Sigmoid colon (tissue), 7 donors: ENCODE measurements at regions of chr17 and their contacts with region 1.

Region 1: DNA sequence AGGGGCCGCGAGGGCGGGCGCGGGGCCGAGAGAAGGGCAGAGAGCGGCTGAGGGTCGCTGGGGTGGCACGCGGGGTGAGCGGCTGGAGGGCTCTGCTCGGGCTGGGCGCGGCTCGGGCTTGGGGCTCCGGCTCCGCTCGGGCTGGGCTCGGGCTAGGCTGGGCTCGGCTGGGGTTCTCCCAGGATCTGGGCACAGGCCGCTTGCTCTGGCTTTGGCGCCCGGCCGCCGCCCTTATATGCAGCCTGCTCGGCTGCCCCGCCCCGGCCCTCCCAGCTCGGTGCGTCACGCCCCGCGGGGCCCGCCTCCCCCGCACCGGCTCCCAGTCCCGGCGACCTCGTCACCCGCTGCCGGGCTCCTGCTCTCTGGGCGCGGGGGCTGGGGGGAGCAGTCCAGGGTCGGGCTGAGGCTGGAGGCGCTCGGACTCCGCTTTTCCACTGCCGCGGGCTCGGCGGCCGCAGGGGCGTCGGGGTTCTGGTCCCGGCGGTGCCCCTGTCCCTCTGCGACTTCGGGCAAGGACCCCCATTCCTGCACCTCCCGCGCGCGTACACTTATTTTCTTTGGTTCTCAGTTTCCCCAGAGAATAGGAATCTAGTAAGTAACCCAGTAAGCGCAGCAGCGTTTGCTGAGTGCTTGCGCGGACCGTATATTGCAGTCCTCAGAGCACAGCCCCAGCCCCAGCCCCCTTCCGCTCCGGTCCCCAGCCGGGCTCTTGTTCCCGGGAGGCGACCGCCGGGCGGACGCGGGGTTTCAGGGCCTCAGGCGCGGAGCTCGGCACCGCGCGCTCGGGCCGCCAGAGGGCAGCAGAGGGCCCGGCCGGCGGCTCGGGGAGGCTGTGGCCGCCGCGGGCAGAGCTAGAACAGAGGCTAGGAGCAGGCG is at the start of gene RASD1:
- DNase-seq: peak; percentile 96
- H3K4me3 ChIP-seq: peak within 1 kb of the TSS; percentile 59 to 75 (median 64)
- H3K27ac ChIP-seq: peak within 1 kb of the TSS; percentile 82 to 89 (median 86)
- H3K4me1 ChIP-seq: peaks cover 0 to 24% (median 23%) of the 10 kb centered on the region in 4 donors
- H3K27me3 ChIP-seq: peaks cover 0 to 11% (median 0%) of the 10 kb centered on the region in 3 donors
- CTCF ChIP-seq: peak; percentile 30 to 98 (median 46)
- EP300 ChIP-seq: no peak
- POLR2A ChIP-seq: peak; percentile 83 to 87
- total RNA-seq, gene RASD1: 5.8 to 12.8 (median 12.1) TPM

Region 2: DNA sequence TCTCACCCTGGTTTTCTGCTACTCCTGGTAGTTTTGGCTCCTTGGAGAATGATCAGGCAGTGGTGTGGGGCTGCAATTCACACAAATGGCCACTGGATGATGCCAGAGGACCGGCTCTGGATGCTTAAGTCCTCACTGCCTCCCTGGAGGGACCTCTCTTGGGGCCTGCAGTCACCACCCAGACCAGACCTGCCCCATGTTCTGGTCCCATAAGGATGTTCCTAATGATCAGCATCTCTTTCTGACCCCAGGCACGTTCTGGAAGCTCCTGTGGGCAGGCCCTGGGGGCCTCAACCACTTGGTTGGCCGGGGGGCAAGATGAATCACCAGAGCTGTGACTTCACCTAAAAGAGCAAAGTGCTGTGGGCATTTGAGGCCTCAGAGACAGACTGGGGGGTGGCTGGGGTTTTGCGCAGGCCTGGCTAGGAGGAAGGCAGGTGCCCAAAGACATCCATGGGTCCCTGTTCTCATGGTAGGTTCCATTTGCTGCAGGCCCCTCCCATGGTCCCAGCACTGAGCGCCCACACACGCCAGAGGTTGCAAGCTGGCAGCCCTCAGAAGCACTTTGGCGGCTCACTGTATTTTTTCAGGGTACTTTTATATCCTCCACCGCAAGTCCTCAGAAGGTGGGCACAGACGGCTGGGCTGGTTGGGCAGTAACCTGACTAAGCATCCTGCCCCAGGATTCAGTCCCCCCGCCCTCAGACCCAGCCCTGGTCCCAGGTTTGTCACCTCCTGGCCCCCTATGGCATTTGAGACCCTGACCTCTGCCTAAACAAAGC is 140.1 kb before region 1 on chr17:
- intact Hi-C with region 1: loop called (anchors 2 kb)
- DNase-seq: peak; percentile 81
- H3K4me3 ChIP-seq: no peak overlapping the region
- H3K27ac ChIP-seq: no peak overlapping the region
- H3K4me1 ChIP-seq: peaks cover 0 to 7% (median 4%) of the 10 kb centered on the region in 4 donors
- H3K27me3 ChIP-seq: peaks cover 0 to 13% (median 7%) of the 10 kb centered on the region in 3 donors
- CTCF ChIP-seq: peak; percentile 89 to 99 (median 98)
- EP300 ChIP-seq: no peak
- POLR2A ChIP-seq: no peak

Region 3: GRCh38 chr17:17462048-17462824 is 34.2 kb before region 1 on chr17:
- intact Hi-C with region 1: no loop called
- DNase-seq: no peak
- H3K4me3 ChIP-seq: no peak overlapping the region
- H3K27ac ChIP-seq: no peak overlapping the region
- H3K4me1 ChIP-seq: no peaks in the 10 kb centered on the region
- H3K27me3 ChIP-seq: peaks cover 0 to 6% (median 0%) of the 10 kb centered on the region in 3 donors
- CTCF ChIP-seq: no peak
- EP300 ChIP-seq: no peak
- POLR2A ChIP-seq: no peak

Region 4: DNA sequence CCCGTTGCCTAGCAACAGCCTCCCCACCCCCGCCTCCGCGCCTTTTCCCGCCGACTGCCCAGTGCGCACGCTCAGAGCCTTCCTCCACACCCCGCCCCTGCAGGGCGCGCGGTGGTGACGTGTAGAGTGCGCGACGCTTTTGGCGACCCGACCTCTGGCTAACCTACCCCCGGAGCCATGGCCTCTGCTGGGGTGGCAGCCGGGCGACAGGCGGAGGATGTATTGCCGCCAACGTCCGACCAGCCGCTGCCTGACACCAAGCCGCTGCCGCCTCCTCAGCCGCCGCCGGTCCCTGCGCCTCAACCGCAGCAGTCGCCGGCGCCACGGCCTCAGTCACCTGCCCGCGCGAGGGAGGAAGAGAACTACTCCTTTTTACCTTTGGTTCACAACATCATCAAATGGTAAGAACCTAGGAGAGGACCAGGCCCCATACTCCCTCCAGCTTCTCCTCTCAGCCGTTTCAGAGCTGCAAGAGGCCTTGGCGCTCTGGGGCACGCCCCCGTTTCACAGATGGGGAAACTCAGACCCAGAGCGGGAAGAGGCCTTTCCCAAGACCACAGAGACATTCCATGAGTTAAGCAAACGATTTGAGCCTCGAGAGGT is 19.5 kb before region 1 on chr17 and contains the start of gene MED9:
- intact Hi-C with region 1: loop called (anchors 2 kb)
- DNase-seq: peak; percentile 96
- H3K4me3 ChIP-seq: peak within 1 kb of the TSS; percentile 78 to 100 (median 98)
- H3K27ac ChIP-seq: peak within 1 kb of the TSS; percentile 90 to 95 (median 91)
- H3K4me1 ChIP-seq: peaks cover 0 to 46% (median 28%) of the 10 kb centered on the region in 4 donors
- H3K27me3 ChIP-seq: no peaks in the 10 kb centered on the region
- CTCF ChIP-seq: no peak
- EP300 ChIP-seq: peak in 1 of 4 donors; percentile 46
- POLR2A ChIP-seq: peak; percentile 16 to 57
- total RNA-seq, gene MED9: 9.7 to 15.3 (median 13.7) TPM

Region 5: GRCh38 chr17:17568749-17569195 is 72.3 kb after region 1 on chr17:
- intact Hi-C with region 1: loop called (anchors 1 kb)
- DNase-seq: no peak
- H3K4me3 ChIP-seq: no peak overlapping the region
- H3K27ac ChIP-seq: no peak overlapping the region
- H3K4me1 ChIP-seq: peaks cover 0 to 36% (median 27%) of the 10 kb centered on the region in 4 donors
- H3K27me3 ChIP-seq: no peaks in the 10 kb centered on the region
- CTCF ChIP-seq: peak; percentile 17 to 61 (median 53)
- EP300 ChIP-seq: no peak
- POLR2A ChIP-seq: no peak

Region 6: GRCh38 chr17:17591355-17592298 is 95.2 kb after region 1 on chr17 and contains the start of gene PEMT:
- intact Hi-C with region 1: loop called (anchors 2 kb)
- DNase-seq: peak; percentile 99
- H3K4me3 ChIP-seq: peak within 1 kb of the TSS; percentile 65 to 81 (median 74)
- H3K27ac ChIP-seq: peak within 1 kb of the TSS; percentile 84 to 92 (median 89)
- H3K4me1 ChIP-seq: peaks cover 0 to 35% (median 22%) of the 10 kb centered on the region in 4 donors
- H3K27me3 ChIP-seq: no peaks in the 10 kb centered on the region
- CTCF ChIP-seq: no peak
- EP300 ChIP-seq: no peak
- POLR2A ChIP-seq: peak in 1 of 2 donors; percentile 36
- total RNA-seq, gene PEMT: 8.6 to 21.9 (median 16.6) TPM

Region 7: GRCh38 chr17:17641621-17642409 is 145.4 kb after region 1 on chr17:
- intact Hi-C with region 1: loop called (anchors 2 kb)
- DNase-seq: peak; percentile 87
- H3K4me3 ChIP-seq: no peak overlapping the region
- H3K27ac ChIP-seq: no peak overlapping the region
- H3K4me1 ChIP-seq: no peaks in the 10 kb centered on the region
- H3K27me3 ChIP-seq: no peaks in the 10 kb centered on the region
- CTCF ChIP-seq: peak; percentile 71 to 90 (median 88)
- EP300 ChIP-seq: no peak
- POLR2A ChIP-seq: no peak